ENCODE measurements at regions of chr22 and their contacts with region 1.

Region 1: DNA sequence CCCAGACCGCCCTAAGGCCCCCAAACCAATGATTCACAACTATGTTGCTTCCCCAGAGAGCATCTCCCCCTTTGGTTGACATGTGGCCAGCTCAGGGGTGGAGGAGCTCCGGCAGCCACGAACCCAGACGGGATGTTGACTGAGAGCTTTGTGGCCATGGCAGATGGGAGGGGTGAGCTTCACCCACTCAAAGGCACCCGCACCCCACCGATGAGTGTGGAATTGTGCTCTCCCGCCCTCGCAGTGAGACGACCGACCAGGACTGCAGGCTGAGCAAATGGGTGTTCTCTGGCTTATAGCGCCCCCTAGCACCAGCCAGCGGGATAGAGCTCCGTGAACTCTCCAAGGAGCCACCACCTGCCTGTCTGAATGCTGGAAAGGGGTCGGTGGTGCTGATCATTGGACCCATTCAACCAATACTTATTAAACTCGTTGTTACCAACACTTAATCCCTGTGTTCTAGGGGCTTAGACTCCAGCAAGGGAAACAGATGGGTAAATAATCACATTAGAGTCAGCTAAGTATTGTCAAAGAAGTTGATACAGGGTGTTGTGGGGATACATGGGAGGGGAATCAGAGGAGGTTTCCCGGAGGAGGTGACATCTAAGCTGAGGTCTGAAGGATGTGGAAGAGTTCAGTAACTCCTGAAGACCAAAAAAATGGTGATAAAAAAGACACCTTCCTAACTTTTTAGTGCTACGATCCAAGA is 4.5 kb upstream of the TIMP3 start:
- DNase-seq: peak; percentile 74
- H3K4me3 Mint-ChIP-seq: no peak overlapping the region
- H3K27ac Mint-ChIP-seq: no peak overlapping the region
- H3K4me1 Mint-ChIP-seq: peaks cover 4% of the 10 kb centered on the region
- H3K27me3 Mint-ChIP-seq: peaks cover 29% of the 10 kb centered on the region

Region 2: GRCh38 chr22:32528984-32529982 is 267.7 kb before region 1 on chr22:
- CTCF ChIA-PET with region 1: interaction called, 45 read pairs
- intact Hi-C with region 1: loop called (anchors 1 kb)
- DNase-seq: peak; percentile 83
- H3K4me3 Mint-ChIP-seq: no peak overlapping the region
- H3K27ac Mint-ChIP-seq: no peak overlapping the region
- H3K4me1 Mint-ChIP-seq: no peaks in the 10 kb centered on the region
- H3K27me3 Mint-ChIP-seq: no peaks in the 10 kb centered on the region

Region 3: DNA sequence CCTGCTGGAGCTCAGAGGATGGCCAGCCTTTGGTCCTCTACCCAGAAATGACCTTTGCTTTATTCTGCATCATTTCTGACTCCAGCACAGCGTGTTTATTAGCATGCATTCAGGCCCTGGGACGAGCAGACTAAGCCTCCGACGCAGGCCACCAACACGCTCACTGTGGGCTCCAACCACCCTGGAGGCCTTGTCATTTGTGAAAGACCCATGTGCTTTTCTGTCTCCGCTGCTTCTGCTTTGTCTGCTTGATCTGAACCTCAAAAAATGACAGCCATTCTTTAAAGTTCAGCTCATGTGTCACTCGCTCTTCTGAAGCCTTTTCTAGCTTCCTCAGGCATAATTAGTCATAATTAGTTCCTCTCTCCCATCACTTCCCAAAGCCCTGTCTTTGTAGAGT is 104.6 kb before region 1 on chr22:
- CTCF ChIA-PET with region 1: interaction called, 12 read pairs
- intact Hi-C with region 1: no loop called
- DNase-seq: no peak
- H3K4me3 Mint-ChIP-seq: no peak overlapping the region
- H3K27ac Mint-ChIP-seq: no peak overlapping the region
- H3K4me1 Mint-ChIP-seq: no peaks in the 10 kb centered on the region
- H3K27me3 Mint-ChIP-seq: peaks cover 4% of the 10 kb centered on the region

Region 4: GRCh38 chr22:32810561-32811004 is 13.6 kb after region 1 on chr22:
- CTCF ChIA-PET with region 1: interaction called, 39 read pairs
- intact Hi-C with region 1: no loop called
- DNase-seq: no peak
- H3K4me3 Mint-ChIP-seq: no peak overlapping the region
- H3K27ac Mint-ChIP-seq: no peak overlapping the region
- H3K4me1 Mint-ChIP-seq: no peaks in the 10 kb centered on the region
- H3K27me3 Mint-ChIP-seq: peaks cover 9% of the 10 kb centered on the region

Region 5: GRCh38 chr22:32880893-32881596 is 84.0 kb after region 1 on chr22:
- CTCF ChIA-PET with region 1: no interaction called
- intact Hi-C with region 1: no loop called
- DNase-seq: peak; percentile 41
- H3K4me3 Mint-ChIP-seq: peak overlapping the region; percentile 67
- H3K27ac Mint-ChIP-seq: no peak overlapping the region
- H3K4me1 Mint-ChIP-seq: peaks cover 10% of the 10 kb centered on the region
- H3K27me3 Mint-ChIP-seq: no peaks in the 10 kb centered on the region

Region 6: GRCh38 chr22:33000342-33001280 is 203.6 kb after region 1 on chr22:
- CTCF ChIA-PET with region 1: interaction called, 10 read pairs
- intact Hi-C with region 1: loop called (anchors 5 kb)
- DNase-seq: peak; percentile 44
- H3K4me3 Mint-ChIP-seq: no peak overlapping the region
- H3K27ac Mint-ChIP-seq: no peak overlapping the region
- H3K4me1 Mint-ChIP-seq: no peaks in the 10 kb centered on the region
- H3K27me3 Mint-ChIP-seq: peaks cover 10% of the 10 kb centered on the region

Region 7: DNA sequence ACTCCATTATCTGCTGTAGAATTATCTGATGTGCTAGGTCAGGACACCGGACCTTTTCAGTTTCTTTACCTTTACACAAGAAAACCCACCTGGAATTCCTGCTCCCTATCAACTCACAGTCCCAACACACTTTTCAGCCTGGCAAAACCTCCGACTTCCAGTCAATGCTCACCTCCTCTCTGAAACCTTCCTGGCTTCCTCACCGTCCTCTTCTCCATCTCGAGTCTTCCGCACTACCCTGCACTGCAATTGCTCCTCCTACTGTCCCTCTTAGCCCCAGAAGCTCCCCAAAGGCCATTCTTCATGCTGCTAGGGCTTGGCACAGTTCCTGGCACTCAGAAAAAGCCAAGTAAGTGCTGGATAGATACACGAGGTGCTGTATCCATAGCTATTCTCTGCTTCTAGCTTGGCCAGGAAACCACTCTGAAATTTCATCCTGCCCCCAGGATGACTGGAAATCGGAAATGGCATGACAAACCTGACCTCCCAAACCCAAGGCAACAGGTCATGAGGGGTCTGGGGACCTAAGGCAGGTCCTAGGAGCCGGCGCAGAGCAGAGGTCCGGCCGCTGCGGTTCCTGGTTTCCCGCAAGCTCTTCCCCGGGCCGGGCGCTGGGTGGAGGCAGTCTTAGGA is 260.5 kb after region 1 on chr22:
- CTCF ChIA-PET with region 1: no interaction called
- intact Hi-C with region 1: no loop called
- DNase-seq: no peak
- H3K4me3 Mint-ChIP-seq: no peak overlapping the region
- H3K27ac Mint-ChIP-seq: no peak overlapping the region
- H3K4me1 Mint-ChIP-seq: peaks cover 4% of the 10 kb centered on the region
- H3K27me3 Mint-ChIP-seq: peaks cover 68% of the 10 kb centered on the region

Measured in activated naive CD4-positive, alpha-beta T cell treated with anti-CD3 and anti-CD28 coated beads for 36 hours (primary cell).